Left ventricle myocardium superior (tissue), 1 donor: ENCODE measurements at regions of chr14 and their contacts with region 1.

Region 1: GRCh38 chr14:76456200-76456599 is 80.3 kb downstream of the ESRRB start:
- DNase-seq: no peak
- ATAC-seq: peak; percentile 61

Region 2: DNA sequence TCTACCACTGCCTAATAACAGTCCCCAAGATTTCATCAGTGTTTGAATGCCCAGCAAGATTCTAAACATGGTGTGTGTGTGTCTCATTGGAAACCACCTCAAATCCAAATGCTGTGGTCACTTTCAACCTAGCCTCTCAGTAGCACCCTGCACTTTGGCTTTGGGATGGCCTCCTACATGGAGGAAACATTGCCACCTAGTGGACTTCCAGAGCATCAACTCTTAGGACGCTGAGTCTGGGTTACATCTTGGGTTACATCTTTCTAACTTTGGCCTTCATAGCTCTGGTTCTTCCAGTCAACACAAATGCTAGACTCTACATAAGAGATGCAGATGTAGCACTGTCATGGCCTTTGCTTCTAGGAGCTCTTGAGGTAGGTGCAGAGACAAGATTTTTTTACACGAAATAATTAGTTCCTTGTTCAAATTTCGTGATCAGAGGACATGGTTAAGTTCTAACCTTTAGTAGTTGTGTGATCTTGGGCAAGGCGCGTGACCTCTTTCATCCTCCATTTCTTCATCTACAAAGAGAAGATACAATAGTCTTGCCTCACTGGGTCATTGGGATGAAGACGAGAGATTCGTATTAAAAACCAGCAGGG is 191.6 kb after region 1 on chr14:
- intact Hi-C with region 1: loop called (anchors 10 kb)
- DNase-seq: no peak
- ATAC-seq: peak; percentile 76